HEK293T (cell line): ENCODE measurements at regions of chr5 and their contacts with region 1.

Region 1: DNA sequence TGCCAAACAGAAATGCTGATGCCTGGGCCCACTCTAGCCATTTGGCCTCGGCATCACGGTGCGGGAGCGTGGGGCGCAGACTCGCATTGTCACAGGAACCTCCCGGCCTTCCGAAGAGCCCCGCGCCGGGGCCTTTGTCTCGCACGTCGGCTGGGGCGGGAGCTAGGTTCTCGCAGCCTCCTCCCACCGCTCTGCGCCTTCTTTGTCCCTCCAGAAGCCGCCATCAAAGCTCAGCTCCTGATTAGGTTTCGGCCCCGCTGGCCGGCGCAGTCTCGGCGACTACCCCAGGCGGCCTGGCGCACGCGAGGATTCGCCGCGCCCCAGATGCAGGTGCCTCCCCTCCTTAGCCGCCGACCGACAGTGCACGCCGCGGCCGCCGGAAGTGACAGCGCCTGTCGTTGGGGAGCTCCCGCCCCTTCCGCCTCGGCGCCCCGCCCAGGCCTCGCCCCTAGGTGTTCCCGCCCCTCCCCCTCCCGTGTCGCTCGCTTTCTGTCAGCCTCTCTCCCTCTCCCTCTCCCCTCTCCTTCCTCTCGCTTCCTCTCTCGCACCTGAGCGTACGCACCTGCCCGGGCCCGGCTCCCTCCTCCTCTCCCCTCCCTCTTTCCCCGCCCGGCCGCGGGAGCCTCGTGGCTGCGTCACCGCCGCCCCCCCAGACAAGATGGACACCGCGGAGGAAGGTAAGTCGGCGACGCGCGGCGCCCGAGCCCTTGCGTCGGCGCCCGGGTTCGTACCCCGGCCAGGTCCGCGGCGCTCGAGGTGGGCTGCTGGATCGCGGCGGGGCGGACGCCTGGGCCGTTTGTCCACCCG is at the start of gene MARCHF6:
- DNase-seq: peak; percentile 83

Region 2: GRCh38 chr5:9920691-9921090 is 432.8 kb before region 1 on chr5:
- CTCF ChIA-PET with region 1: no interaction called
- POLR2A ChIA-PET with region 1: no interaction called
- DNase-seq: no peak

Region 3: GRCh38 chr5:10283927-10284635 is 69.4 kb before region 1 on chr5:
- CTCF ChIA-PET with region 1: interaction called, 12 read pairs
- POLR2A ChIA-PET with region 1: interaction called, 13 read pairs
- DNase-seq: peak; percentile 82

Region 4: GRCh38 chr5:10310066-10310779 is 43.2 kb before region 1 on chr5:
- CTCF ChIA-PET with region 1: no interaction called
- POLR2A ChIA-PET with region 1: interaction called, 18 read pairs
- DNase-seq: peak; percentile 49

Region 5: DNA sequence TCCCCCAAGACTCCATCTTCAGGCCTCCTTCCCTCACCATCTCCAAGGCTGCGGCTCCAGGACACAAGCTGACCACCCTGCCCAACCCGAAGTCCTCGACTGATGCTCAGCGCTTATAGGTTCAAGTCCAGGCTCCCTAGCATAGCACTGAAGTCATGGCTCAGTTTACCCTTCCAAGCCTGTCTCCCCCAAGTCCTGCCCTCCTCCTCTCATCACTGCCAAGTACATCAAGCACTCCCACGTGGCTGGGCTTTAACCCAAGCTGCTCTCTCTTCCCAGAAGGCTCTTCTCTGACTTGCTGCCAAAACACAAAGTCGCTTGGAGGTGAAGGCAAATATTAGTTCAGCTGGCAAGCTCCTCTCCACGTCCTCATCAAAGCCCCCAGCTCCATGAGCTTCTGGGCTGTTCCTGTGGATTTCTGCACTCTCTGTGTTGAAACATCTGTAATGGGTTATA is 22.1 kb before region 1 on chr5:
- CTCF ChIA-PET with region 1: no interaction called
- POLR2A ChIA-PET with region 1: interaction called, 34 read pairs
- DNase-seq: no peak

Region 6: GRCh38 chr5:10364186-10364683 is 10.8 kb after region 1 on chr5:
- CTCF ChIA-PET with region 1: interaction called, 6 read pairs
- POLR2A ChIA-PET with region 1: interaction called, 11 read pairs
- DNase-seq: no peak

Region 7: DNA sequence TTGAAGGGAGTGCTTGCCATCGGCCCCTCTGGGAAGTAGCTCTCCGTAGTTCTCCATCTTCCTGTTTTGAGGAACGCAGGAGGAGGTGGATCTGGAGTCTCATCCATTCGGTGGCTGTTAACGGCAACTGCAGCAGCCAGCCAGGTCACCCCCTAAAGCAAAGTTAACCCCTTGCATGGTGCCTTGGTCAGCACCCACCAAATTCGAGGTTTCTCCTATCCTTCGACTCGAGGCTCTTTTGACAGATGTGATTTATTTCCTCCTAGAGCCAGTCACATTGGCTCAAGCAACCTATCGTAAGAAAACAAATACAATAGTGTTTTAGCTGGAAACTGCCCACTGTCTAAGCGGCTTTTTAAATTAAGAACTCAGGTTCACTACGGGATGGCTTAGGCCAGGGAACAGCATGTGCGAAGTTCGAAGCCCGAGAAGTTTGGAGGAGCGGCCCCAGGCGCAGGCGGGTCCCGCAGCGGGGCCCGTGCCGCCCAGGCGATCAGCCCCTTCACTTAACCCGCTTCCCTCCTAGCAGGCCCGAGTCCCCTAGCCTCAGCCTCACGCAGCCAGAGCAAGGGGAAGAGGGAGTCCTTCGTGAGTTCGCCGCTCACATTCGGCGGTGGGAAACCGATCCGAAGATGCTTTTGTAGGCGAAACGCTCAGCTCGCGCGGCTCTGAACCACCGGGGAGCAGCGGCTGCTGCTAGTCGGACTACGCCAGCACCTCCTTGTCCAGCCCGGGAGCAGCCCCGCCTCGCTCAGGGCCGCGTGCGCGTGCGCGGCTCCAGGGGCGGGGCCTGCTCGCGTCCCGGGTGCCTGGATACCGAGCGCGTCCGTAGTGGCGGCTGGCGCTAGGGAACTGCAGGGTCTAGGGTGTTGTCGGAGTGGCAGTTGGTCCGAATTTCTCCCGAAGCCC is 87.9 kb after region 1 on chr5 and contains the start of gene ROPN1L:
- CTCF ChIA-PET with region 1: no interaction called
- POLR2A ChIA-PET with region 1: interaction called, 10 read pairs
- DNase-seq: peak; percentile 96